ENCODE measurements at regions of chr1 and their contacts with region 1.

Region 1: DNA sequence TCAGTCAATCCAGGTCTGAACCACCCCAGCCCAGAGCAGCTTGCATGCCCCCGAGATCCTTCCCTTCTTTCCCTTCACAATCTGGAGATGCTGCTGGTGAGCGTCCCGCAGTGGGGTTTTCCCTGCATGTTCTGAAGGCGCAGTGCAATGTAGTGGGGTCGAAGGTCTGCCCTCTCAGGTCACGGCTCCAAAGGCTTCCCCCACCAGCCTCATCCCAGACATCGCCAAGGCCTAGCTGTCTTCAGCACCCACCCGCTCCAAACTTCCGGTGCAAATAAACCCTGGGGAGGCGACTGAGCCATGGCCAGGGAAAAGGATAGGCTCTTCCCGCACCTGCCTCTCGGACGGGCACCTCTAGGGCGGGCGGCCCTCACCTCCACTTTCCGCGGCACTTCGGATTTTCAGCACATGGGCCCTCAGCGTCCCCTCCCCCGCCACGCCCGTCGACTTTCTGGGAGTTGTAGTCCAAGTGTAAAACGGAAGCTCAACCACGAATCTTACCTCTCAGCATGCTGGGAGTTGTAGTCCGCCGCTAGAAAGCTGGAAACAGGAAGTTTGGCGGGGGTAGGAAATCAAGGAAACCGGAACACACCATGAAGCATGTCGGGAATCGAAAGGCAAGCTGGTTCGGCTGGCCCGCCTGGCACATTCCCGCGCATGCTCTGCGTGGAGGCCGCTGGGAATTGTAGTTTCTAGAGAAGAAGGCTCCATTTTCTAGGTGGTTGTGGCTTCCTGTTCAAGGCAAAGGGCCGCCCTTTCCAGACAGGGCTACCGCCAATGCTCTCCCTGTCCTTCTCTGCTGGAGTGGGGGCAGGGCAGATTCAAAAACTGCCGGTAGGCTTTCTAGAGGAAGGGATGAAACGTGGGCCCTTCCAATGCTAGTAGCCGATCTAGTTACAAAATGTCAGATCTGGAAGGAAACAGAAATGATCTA is at the start of gene MRPL24:
- DNase-seq: peak; percentile 85 to 99 (median 97)
- ATAC-seq: peak; percentile 89 to 93 (median 91)
- H3K4me3 ChIP-seq: peak within 1 kb of the TSS; percentile 58 to 70
- H3K4me3 Mint-ChIP-seq: peak within 1 kb of the TSS; percentile 96 to 99 (median 97)
- H3K27ac ChIP-seq: peak within 1 kb of the TSS; percentile 89
- H3K27ac Mint-ChIP-seq: peak within 1 kb of the TSS; percentile 98 to 99
- H3K4me1 ChIP-seq: peaks cover 14 to 17% of the 10 kb centered on the region in 2 experiments
- H3K4me1 Mint-ChIP-seq: peaks cover 42 to 45% (median 43%) of the 10 kb centered on the region in 3 donors
- H3K27me3 ChIP-seq: no peaks in the 10 kb centered on the region
- H3K27me3 Mint-ChIP-seq: no peaks in the 10 kb centered on the region
- total RNA-seq, gene MRPL24: 23.8 to 66.6 (median 52.6) TPM

Region 2: DNA sequence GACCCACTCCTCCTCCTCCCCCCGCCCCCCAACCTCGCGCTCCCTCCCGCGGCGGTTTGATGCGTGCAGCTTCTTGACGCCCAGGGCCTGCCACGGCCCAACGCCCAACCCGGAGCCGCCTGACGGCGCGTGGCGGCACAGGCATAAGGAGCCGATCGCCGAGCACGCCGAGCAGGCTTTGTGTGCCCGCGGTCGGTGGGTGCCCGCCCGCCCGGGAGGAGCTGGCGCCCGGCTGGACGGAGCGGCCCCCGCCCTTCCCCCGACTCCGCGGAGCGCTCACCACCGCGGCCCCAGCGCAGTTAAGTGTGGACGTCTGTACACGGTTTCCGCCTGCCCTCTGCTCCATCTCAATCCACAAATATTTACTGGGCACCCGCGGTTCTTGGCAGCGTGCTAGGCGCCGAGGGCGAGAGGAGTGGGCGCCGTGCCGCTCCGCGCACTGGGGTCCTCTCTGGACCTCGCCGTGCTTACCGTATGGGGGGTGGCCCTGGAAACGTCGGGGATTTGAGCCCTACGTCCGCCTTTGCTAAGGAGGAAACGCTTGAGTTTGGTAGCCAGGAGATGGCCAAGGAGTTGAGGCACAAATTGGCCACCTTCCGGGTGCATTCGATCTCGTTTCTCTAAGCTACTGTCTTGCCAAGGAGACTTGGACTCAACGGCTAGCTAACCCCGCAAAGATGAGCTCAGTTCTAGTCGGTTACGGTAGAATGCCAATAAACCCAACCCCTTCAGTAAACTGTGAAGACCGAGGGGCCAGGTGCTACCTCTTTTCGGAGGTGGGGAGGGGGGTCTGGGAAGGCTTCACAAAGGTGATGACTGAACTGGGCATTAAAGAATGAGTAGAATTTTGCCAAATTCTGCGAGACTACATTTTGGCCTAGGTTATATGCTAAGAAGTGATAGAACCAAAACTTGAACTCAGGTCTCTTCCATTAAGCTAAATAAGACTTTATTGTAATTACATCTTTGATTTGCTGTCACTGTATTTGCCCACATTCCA is 11.1 kb after region 1 on chr1:
- CTCF ChIA-PET with region 1: interaction called in 1 of 2 experiments, 14 read pairs
- POLR2A ChIA-PET with region 1: interaction called, 3 to 6 read pairs
- DNase-seq: peak; percentile 88 to 97 (median 95)
- ATAC-seq: peak; percentile 86 to 91 (median 88)
- H3K4me3 ChIP-seq: peak overlapping the region; percentile 92 to 94
- H3K4me3 Mint-ChIP-seq: peak overlapping the region; percentile 91 to 92 (median 92)
- H3K27ac ChIP-seq: peak overlapping the region; percentile 78
- H3K27ac Mint-ChIP-seq: peak overlapping the region; percentile 91 to 92
- H3K4me1 ChIP-seq: peaks cover 36 to 48% of the 10 kb centered on the region in 2 experiments
- H3K4me1 Mint-ChIP-seq: peaks cover 49 to 60% (median 56%) of the 10 kb centered on the region in 3 donors
- H3K27me3 ChIP-seq: no peaks in the 10 kb centered on the region
- H3K27me3 Mint-ChIP-seq: no peaks in the 10 kb centered on the region

Region 3: GRCh38 chr1:156767101-156767878 is 26.3 kb after region 1 on chr1 and contains the start of gene PRCC:
- CTCF ChIA-PET with region 1: interaction called in 1 of 2 experiments, 16 read pairs
- POLR2A ChIA-PET with region 1: interaction called in 1 of 2 experiments, 10 read pairs
- DNase-seq: peak; percentile 92 to 100 (median 99)
- ATAC-seq: peak; percentile 92 to 94 (median 93)
- H3K4me3 ChIP-seq: peak within 1 kb of the TSS; percentile 93 to 96
- H3K4me3 Mint-ChIP-seq: no peak within 1 kb of the TSS
- H3K27ac ChIP-seq: peak within 1 kb of the TSS; percentile 97
- H3K27ac Mint-ChIP-seq: no peak within 1 kb of the TSS
- H3K4me1 ChIP-seq: peaks cover 19 to 36% of the 10 kb centered on the region in 2 experiments
- H3K4me1 Mint-ChIP-seq: peaks cover 34 to 41% (median 39%) of the 10 kb centered on the region in 3 donors
- H3K27me3 ChIP-seq: no peaks in the 10 kb centered on the region
- H3K27me3 Mint-ChIP-seq: no peaks in the 10 kb centered on the region
- total RNA-seq, gene PRCC: 55.3 to 67.7 (median 65.4) TPM

Region 4: DNA sequence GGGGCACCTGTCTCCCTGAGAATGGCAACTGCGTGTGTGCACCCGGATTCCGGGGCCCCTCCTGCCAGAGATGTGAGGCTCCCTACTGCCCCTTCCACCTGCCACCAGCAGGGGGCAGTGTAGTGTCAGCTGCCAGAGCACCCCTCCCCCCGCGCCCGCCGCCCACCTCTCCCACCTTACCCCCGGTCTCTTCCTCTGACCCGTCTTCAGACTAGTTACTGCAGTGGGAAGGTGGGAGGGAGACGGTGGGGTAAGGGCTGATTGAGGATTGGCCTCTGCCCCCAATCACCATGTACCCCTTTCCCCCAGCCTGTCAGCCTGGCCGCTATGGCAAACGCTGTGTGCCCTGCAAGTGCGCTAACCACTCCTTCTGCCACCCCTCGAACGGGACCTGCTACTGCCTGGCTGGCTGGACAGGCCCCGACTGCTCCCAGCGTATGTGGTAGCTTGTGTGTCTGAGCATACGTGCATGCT is 169.4 kb after region 1 on chr1:
- CTCF ChIA-PET with region 1: no interaction called
- POLR2A ChIA-PET with region 1: no interaction called
- DNase-seq: peak in 31 of 35 experiments; percentile 18 to 76 (median 45)
- ATAC-seq: peak; percentile 47 to 73 (median 60)
- H3K4me3 ChIP-seq: no peak overlapping the region
- H3K4me3 Mint-ChIP-seq: no peak overlapping the region
- H3K27ac ChIP-seq: no peak overlapping the region
- H3K27ac Mint-ChIP-seq: no peak overlapping the region
- H3K4me1 ChIP-seq: peaks cover 0 to 6% of the 10 kb centered on the region in 2 experiments
- H3K4me1 Mint-ChIP-seq: no peaks in the 10 kb centered on the region
- H3K27me3 ChIP-seq: peaks cover 0 to 68% of the 10 kb centered on the region in 2 experiments
- H3K27me3 Mint-ChIP-seq: peaks cover 14 to 35% of the 10 kb centered on the region in 2 donors

Measured in T-cell (primary cell).